ENCODE measurements at regions of chr9 and their contacts with region 1.

Region 1: DNA sequence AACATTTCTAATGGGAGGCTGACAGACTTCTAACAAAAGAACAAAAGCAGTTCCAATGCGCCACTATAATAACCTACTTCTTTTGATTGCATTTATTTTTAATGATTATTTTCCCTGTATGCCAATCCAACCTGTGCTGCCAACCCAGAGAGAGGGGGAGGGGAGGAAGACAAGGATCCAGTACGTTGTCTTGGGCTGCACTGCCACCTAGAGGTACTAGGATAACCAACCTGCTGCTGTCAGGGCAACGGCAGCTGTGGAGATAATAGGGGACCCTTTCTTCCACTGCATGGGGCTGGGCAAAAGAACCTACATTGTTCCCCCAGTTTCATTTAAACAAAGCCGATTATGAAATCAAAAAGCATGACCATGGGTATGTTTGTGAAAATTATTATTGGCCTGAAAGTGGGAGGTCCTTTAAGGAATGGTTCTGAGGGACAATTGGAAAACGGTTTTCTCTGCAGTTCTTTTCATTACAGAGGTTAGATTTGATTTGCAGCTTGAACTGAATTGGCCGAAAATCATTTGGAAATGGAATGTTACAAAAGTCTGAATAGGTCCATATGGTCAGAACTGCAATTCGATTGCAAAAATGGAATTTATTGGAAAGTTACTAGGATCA is 101.3 kb downstream of the RASEF start:
- DNase-seq: peak; percentile 83
- ATAC-seq: peak; percentile 93
- H3K4me3 ChIP-seq: no peak overlapping the region
- H3K27ac ChIP-seq: no peak overlapping the region
- H3K4me1 ChIP-seq: no peaks in the 10 kb centered on the region
- H3K27me3 ChIP-seq: no peaks in the 10 kb centered on the region
- CTCF ChIP-seq: peak; percentile 82

Region 2: GRCh38 chr9:81724242-81724889 is 1237.2 kb before region 1 on chr9:
- CTCF ChIA-PET with region 1: no interaction called
- POLR2A ChIA-PET with region 1: no interaction called
- intact Hi-C with region 1: loop called (anchors 5 kb)
- DNase-seq: peak; percentile 38
- ATAC-seq: peak; percentile 57
- H3K4me3 ChIP-seq: no peak overlapping the region
- H3K27ac ChIP-seq: no peak overlapping the region
- H3K4me1 ChIP-seq: peaks cover 13% of the 10 kb centered on the region
- H3K27me3 ChIP-seq: no peaks in the 10 kb centered on the region
- CTCF ChIP-seq: no peak

Region 3: GRCh38 chr9:82532504-82533180 is 429.0 kb before region 1 on chr9:
- CTCF ChIA-PET with region 1: no interaction called
- POLR2A ChIA-PET with region 1: no interaction called
- intact Hi-C with region 1: loop called (anchors 1 kb)
- DNase-seq: peak; percentile 7
- ATAC-seq: no peak
- H3K4me3 ChIP-seq: no peak overlapping the region
- H3K27ac ChIP-seq: no peak overlapping the region
- H3K4me1 ChIP-seq: no peaks in the 10 kb centered on the region
- H3K27me3 ChIP-seq: no peaks in the 10 kb centered on the region
- CTCF ChIP-seq: peak; percentile 50

Region 4: GRCh38 chr9:82606492-82607382 is 354.9 kb before region 1 on chr9:
- CTCF ChIA-PET with region 1: no interaction called
- POLR2A ChIA-PET with region 1: no interaction called
- intact Hi-C with region 1: loop called (anchors 1 kb)
- DNase-seq: peak; percentile 77
- ATAC-seq: peak; percentile 54
- H3K4me3 ChIP-seq: peak overlapping the region; percentile 43; the same call in 1 of the 2 replicates
- H3K27ac ChIP-seq: no peak overlapping the region
- H3K4me1 ChIP-seq: peaks cover 3% of the 10 kb centered on the region; the same call in 1 of the 2 replicates
- H3K27me3 ChIP-seq: no peaks in the 10 kb centered on the region
- CTCF ChIP-seq: peak; percentile 74

Region 5: GRCh38 chr9:82883436-82883835 is 78.2 kb before region 1 on chr9:
- CTCF ChIA-PET with region 1: no interaction called
- POLR2A ChIA-PET with region 1: no interaction called
- intact Hi-C with region 1: no loop called
- DNase-seq: no peak
- ATAC-seq: no peak
- H3K4me3 ChIP-seq: no peak overlapping the region
- H3K27ac ChIP-seq: no peak overlapping the region
- H3K4me1 ChIP-seq: peaks cover 9% of the 10 kb centered on the region
- H3K27me3 ChIP-seq: no peaks in the 10 kb centered on the region
- CTCF ChIP-seq: no peak

Region 6: GRCh38 chr9:82894961-82895821 is 66.4 kb before region 1 on chr9:
- CTCF ChIA-PET with region 1: no interaction called
- POLR2A ChIA-PET with region 1: no interaction called
- intact Hi-C with region 1: no loop called
- DNase-seq: no peak
- ATAC-seq: no peak
- H3K4me3 ChIP-seq: no peak overlapping the region
- H3K27ac ChIP-seq: no peak overlapping the region
- H3K4me1 ChIP-seq: no peaks in the 10 kb centered on the region
- H3K27me3 ChIP-seq: no peaks in the 10 kb centered on the region
- CTCF ChIP-seq: no peak

Measured in PC-3 (cell line).